GM12878 (cell line): ENCODE measurements at regions of chr1 and their contacts with region 1.

Region 1: DNA sequence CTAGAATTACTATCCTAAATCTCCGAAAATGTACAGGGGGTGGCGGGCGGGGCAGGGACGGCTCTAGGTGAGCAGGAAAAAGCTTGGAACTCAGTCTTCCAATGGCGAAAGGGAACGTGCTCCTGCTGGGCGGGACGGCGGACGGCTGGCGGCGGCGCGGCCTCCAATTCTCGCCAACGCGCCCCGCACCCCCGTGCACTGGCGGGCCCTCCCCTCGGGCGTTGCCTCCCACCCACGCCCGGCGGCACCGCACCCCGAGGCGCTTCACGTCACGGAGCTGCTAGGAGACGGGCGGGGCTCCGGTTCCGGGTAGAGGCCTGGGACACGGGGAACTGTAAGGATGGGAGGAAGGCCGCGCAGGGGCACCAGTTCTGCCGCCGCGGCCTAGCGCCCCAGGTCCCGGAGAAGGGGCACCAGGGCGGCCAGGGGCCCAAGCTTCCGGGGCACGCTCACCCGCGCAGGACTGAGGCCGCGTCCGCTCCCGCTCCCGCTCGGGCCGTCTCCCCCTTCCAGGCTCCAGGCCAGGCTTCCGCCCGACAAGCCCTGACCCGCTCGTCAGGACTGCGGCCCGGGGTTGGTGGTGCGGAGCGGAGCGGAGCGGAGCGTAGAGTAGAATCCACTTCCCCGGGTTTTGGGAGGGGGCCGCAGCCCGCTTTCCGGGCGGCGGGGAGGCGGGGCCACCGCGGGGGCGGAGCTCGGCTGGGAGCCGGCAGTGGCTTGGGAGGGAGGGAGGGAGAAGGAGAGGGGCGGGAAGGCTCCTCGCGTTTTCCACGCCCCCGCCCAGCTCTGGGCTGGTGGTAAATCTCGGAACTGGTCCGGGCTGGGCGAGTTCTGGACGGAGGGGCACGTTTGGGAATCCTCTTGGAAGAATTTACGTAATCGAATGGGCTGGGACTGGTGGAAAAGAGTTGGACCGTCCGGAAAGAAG is at the start of gene DDX59:
- DNase-seq: peak; percentile 80
- ATAC-seq: peak; percentile 90
- H3K4me3 ChIP-seq: peak within 1 kb of the TSS; percentile 85
- H3K27ac ChIP-seq: peak within 1 kb of the TSS; percentile 98
- H3K4me1 ChIP-seq: no peaks in the 10 kb centered on the region; the same call in 1 of the 2 replicates
- H3K27me3 ChIP-seq: no peaks in the 10 kb centered on the region
- CTCF ChIP-seq: no peak
- EP300 ChIP-seq: no peak
- POLR2A ChIP-seq: peak; percentile 91
- RAD21 ChIP-seq: no peak
- polyA plus RNA-seq, gene DDX59: 17.3 to 17.5 TPM

Region 2: DNA sequence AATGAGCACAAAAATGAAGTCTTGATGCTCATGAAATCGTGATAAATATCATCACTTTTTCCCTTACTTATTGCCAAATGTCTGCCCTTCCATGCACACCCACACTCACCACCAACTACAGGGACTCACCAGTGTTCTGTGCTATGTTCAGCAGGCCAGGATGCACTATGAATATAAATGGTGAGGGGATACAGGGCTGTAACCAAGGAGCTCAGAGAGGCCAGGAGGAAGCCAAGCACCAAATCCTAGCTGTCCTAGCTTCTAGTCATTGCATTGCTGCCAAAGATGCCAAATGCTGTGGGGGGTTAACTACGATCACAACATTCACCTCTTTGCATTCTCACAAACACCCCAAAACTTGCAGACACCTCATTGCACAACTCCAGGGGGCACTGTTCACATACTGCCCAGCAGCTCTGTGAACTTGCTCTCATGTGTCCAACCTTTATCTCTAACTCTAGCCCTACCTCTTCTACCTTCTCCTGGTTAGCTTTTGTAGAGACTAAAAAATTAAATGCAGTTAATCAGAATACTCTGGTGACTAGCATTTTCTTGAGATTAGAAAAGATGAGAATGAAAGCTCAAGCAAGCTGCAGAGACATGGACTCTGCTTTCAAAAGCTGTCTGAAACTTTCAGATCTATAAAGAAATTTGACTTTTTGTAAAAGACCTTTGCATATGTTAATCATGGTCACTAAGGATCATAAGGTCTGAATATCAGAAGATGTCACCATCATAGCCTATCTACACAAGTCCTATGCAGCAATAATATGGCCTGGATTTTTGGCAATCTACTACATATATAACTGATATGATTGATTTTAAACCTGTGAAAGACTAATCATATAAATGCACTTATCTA is 35.1 kb before region 1 on chr1:
- CTCF ChIA-PET with region 1: interaction called, 4 read pairs
- POLR2A ChIA-PET with region 1: interaction called, 38 read pairs
- RAD21 ChIA-PET with region 1: interaction called, 175 read pairs
- SMC1A ChIA-PET with region 1: interaction called, 46 read pairs
- in situ Hi-C with region 1: no loop called
- intact Hi-C with region 1: no loop called
- DNase-seq: no peak
- ATAC-seq: peak; percentile 59
- H3K4me3 ChIP-seq: no peak overlapping the region
- H3K27ac ChIP-seq: 0 out of 2 replicates have a peak overlapping the region, but pooled peaks have one; percentile 15
- H3K4me1 ChIP-seq: peaks cover 9% of the 10 kb centered on the region
- H3K27me3 ChIP-seq: no peaks in the 10 kb centered on the region
- CTCF ChIP-seq: peak in 1 of 3 experiments; percentile 41; a peak in 2 of 6 replicates
- EP300 ChIP-seq: no peak
- POLR2A ChIP-seq: no peak
- RAD21 ChIP-seq: 0 out of 2 replicates have a peak, but pooled peaks have one; percentile 21

Region 3: DNA sequence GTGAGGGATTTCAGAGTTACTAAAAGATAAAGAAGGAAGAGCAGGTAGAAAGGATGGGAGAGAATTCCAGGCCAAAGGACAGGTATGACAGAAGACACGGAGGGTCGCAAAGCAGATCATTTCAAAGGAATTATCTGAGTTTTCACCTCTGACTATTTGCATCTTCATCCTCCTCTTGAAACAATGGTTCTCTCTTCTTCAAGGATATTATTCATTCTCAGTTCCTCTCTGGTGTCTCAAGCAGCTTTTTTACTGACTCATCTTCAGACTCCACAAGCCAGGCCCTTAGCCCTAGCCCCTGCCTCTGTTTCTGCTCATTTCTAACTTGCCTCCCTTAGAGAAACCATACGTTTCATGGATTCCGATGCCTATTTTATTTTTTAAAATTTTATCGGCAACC is 14.9 kb before region 1 on chr1:
- CTCF ChIA-PET with region 1: interaction called, 4 read pairs
- POLR2A ChIA-PET with region 1: interaction called, 7 read pairs
- RAD21 ChIA-PET with region 1: interaction called, 7 read pairs
- SMC1A ChIA-PET with region 1: interaction called, 31 read pairs
- in situ Hi-C with region 1: no loop called
- intact Hi-C with region 1: no loop called
- DNase-seq: no peak
- ATAC-seq: peak; percentile 97
- H3K4me3 ChIP-seq: peak overlapping the region; percentile 33; the same call in 1 of the 2 replicates
- H3K27ac ChIP-seq: peak overlapping the region; percentile 63
- H3K4me1 ChIP-seq: peaks cover 37% of the 10 kb centered on the region
- H3K27me3 ChIP-seq: no peaks in the 10 kb centered on the region
- CTCF ChIP-seq: no peak
- EP300 ChIP-seq: peak; percentile 54 to 92; a peak in 3 of 4 replicates
- POLR2A ChIP-seq: no peak
- RAD21 ChIP-seq: peak; percentile 13; the same call in 1 of the 2 replicates

Region 4: DNA sequence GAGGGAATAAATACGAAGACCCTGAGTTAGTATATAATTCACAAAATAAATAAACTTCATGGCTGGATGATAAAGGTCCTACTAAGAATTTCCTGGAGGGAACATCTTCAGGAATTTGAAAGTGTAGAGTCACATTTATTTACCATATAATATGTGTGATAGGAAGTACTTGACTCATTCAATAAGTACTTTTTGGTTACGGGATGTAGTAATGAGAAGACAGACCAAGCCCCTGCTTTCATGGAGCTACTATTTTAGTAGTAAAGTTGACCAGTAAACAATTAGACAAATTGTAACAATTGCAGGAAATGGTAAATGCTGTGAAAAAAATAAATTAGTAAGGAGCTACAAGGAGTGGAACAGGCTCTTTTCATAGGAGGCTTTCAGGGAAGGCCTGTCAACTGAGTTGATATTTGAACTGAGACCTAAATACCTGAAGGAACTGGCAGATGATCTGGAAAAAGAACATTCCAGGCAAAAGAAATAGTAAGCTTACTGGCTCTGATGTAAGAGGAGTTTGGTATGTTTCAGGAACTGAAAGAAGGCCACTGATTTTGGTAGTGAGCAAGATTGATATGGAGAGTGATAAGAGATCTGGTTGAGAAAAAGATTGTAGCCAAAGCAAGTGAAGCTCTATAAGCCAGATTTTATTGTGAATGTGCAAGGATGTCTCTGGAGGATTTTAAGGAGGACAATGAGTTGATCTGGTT is 105.3 kb after region 1 on chr1:
- CTCF ChIA-PET with region 1: interaction called, 3 read pairs
- POLR2A ChIA-PET with region 1: interaction called, 4 read pairs
- RAD21 ChIA-PET with region 1: interaction called, 12 read pairs
- SMC1A ChIA-PET with region 1: interaction called, 11 read pairs
- in situ Hi-C with region 1: no loop called
- intact Hi-C with region 1: no loop called
- DNase-seq: no peak
- ATAC-seq: peak; percentile 86
- H3K4me3 ChIP-seq: peak overlapping the region; percentile 29; the same call in 1 of the 2 replicates
- H3K27ac ChIP-seq: peak overlapping the region; percentile 74
- H3K4me1 ChIP-seq: peaks cover 24% of the 10 kb centered on the region
- H3K27me3 ChIP-seq: no peaks in the 10 kb centered on the region
- CTCF ChIP-seq: no peak
- EP300 ChIP-seq: peak in 1 of 2 experiments; percentile 37; a peak in 1 of 4 replicates
- POLR2A ChIP-seq: no peak
- RAD21 ChIP-seq: no peak

Region 5: DNA sequence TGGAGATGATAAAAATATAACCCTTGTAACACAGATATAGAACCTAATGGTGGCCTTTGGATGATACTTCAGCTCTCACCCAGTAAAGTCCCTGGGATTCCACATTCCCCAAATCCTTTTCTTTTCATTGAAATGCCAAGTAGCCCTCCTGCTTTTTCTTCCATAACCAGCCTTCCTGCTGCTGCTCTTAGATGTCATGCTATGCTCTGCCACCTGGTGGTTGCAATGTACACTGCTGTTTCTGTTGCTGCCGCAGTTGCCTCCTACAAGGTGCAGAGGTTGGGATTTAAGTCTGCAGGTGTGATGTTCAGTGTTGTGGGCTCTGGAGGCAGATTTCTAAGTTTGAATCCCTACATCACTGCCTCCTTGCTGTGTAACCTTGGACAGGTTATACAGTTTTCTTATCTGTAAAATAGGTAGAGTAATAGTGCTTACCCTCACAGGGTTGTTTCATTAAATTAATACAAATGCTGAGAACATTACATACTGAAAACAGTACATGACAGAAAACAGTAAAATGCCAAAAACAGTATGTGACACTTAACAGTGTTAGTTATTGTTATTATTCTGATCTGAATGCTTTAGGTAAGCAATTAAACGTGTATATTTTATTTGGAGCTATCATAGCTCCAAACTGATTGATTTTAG is 133.4 kb after region 1 on chr1:
- CTCF ChIA-PET with region 1: interaction called, 4 read pairs
- POLR2A ChIA-PET with region 1: no interaction called
- RAD21 ChIA-PET with region 1: interaction called, 8 read pairs
- SMC1A ChIA-PET with region 1: interaction called, 5 read pairs
- in situ Hi-C with region 1: no loop called
- intact Hi-C with region 1: loop called (anchors 5 kb)
- DNase-seq: peak; percentile 61
- ATAC-seq: peak; percentile 98
- H3K4me3 ChIP-seq: no peak overlapping the region
- H3K27ac ChIP-seq: no peak overlapping the region
- H3K4me1 ChIP-seq: no peaks in the 10 kb centered on the region
- H3K27me3 ChIP-seq: no peaks in the 10 kb centered on the region
- CTCF ChIP-seq: peak; percentile 86 to 92 (median 92)
- EP300 ChIP-seq: no peak
- POLR2A ChIP-seq: no peak
- RAD21 ChIP-seq: peak; percentile 99